ENCODE measurements at regions of chr13 and their contacts with region 1.

Region 1: GRCh38 chr13:44577236-44578066 is 1.3 kb upstream of the TSC22D1 start:
- DNase-seq: peak; percentile 96 to 97
- ATAC-seq: peak; percentile 64 to 68
- H3K4me3 ChIP-seq: peak overlapping the region; percentile 85 to 98 (median 97)
- H3K27ac ChIP-seq: peak overlapping the region; percentile 97 to 100 (median 99)
- H3K4me1 ChIP-seq: peaks cover 17 to 27% of the 10 kb centered on the region in 2 donors
- H3K27me3 ChIP-seq: no peaks in the 10 kb centered on the region
- CTCF ChIP-seq: peak in 2 of 5 experiments; percentile 11 to 38
- POLR2A ChIP-seq: peak; percentile 91 to 92

Region 2: DNA sequence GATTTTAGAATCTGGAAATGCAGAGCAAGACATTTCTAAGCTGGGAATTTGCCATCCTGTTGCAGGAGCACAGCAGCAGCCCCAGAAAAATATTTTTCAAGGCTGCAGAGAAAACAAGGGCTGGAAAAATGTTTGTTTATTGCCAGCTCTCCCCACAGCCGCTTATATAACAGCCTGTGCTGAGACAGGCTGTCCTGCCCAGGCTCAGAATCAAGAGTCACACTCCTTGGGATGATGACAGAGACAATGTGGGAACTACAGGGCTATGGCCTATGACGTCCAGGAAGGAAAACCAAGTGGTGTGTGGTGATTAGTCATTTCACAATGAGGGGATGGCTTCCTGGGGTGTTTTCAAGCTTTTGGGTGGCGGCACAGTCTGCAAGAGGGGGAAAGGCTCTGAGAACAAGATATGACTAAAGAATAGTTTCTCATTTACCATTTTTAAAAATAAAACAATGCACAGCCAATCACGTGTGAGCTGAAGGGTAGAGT is 340.1 kb before region 1 on chr13:
- in situ Hi-C with region 1: no loop called
- intact Hi-C with region 1: loop called (anchors 10 kb)
- DNase-seq: peak; percentile 86 to 89
- ATAC-seq: peak; percentile 87 to 90
- H3K4me3 ChIP-seq: no peak overlapping the region
- H3K27ac ChIP-seq: peak overlapping the region; percentile 91 to 94 (median 93)
- H3K4me1 ChIP-seq: peaks cover 47 to 51% of the 10 kb centered on the region in 2 donors
- H3K27me3 ChIP-seq: no peaks in the 10 kb centered on the region
- CTCF ChIP-seq: no peak
- POLR2A ChIP-seq: peak; percentile 39 to 60

Region 3: DNA sequence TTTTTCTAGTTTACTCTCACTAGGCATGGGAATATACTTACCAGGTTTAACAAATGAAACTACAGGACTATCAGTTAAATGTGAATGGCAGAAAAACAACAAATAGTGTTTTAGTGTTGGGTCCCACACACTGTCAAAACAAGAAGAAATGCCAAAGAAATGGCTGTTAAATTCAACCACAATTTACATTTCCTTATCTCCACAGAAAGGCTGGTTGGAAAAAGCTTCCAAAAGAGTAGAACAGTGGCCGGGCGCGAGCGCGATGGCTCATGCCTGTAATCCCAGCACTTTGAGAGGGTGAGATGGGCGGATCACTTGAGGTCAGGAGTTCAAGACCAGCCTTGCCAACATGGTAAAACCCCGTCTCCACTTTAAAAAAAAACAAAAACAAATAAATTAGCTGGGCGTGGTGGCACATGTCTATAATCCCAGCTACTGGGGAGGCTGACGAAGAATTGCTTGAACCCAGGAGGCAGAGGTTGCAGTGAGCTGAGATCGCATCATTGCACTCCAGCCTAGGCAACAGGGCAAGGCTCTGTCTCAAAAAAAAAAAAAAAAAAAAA is 137.3 kb before region 1 on chr13:
- in situ Hi-C with region 1: no loop called
- intact Hi-C with region 1: no loop called
- DNase-seq: no peak
- ATAC-seq: no peak
- H3K4me3 ChIP-seq: no peak overlapping the region
- H3K27ac ChIP-seq: peak overlapping the region; percentile 70 to 95 (median 73)
- H3K4me1 ChIP-seq: peaks cover 30 to 31% of the 10 kb centered on the region in 2 donors
- H3K27me3 ChIP-seq: no peaks in the 10 kb centered on the region
- CTCF ChIP-seq: no peak
- POLR2A ChIP-seq: no peak

Region 4: GRCh38 chr13:44734201-44734707 is 156.8 kb after region 1 on chr13:
- in situ Hi-C with region 1: no loop called
- intact Hi-C with region 1: loop called (anchors 5 kb)
- DNase-seq: peak; percentile 94 to 98
- ATAC-seq: peak; percentile 80 to 83
- H3K4me3 ChIP-seq: peak overlapping the region in 1 of 4 donors; percentile 24
- H3K27ac ChIP-seq: peak overlapping the region; percentile 88 to 94 (median 92)
- H3K4me1 ChIP-seq: peaks cover 38 to 42% of the 10 kb centered on the region in 2 donors
- H3K27me3 ChIP-seq: no peaks in the 10 kb centered on the region
- CTCF ChIP-seq: no peak
- POLR2A ChIP-seq: no peak

Region 5: DNA sequence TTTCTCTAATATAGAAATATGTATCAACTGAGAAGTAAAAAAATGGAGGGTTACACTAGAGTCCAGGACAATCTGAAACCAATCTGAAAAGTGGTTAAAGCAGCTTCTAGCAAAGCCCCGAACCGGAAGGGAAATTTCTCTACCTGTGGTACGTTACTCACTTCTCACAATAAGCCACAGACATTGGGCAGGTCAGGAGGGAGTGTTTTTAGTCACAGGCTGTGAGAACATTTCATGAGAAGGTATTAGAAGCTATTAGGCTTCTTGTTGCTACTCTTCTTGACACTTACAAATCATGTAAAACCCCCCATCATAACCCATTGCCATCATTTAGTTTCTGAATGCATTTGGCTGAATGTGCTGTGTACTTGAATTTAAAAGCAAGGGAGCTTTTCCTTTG is 290.9 kb after region 1 on chr13:
- in situ Hi-C with region 1: no loop called
- intact Hi-C with region 1: loop called (anchors 1 kb)
- DNase-seq: no peak
- ATAC-seq: no peak
- H3K4me3 ChIP-seq: no peak overlapping the region
- H3K27ac ChIP-seq: peak overlapping the region; percentile 86 to 95 (median 94)
- H3K4me1 ChIP-seq: peaks cover 32 to 34% of the 10 kb centered on the region in 2 donors
- H3K27me3 ChIP-seq: no peaks in the 10 kb centered on the region
- CTCF ChIP-seq: no peak
- POLR2A ChIP-seq: no peak

Region 6: DNA sequence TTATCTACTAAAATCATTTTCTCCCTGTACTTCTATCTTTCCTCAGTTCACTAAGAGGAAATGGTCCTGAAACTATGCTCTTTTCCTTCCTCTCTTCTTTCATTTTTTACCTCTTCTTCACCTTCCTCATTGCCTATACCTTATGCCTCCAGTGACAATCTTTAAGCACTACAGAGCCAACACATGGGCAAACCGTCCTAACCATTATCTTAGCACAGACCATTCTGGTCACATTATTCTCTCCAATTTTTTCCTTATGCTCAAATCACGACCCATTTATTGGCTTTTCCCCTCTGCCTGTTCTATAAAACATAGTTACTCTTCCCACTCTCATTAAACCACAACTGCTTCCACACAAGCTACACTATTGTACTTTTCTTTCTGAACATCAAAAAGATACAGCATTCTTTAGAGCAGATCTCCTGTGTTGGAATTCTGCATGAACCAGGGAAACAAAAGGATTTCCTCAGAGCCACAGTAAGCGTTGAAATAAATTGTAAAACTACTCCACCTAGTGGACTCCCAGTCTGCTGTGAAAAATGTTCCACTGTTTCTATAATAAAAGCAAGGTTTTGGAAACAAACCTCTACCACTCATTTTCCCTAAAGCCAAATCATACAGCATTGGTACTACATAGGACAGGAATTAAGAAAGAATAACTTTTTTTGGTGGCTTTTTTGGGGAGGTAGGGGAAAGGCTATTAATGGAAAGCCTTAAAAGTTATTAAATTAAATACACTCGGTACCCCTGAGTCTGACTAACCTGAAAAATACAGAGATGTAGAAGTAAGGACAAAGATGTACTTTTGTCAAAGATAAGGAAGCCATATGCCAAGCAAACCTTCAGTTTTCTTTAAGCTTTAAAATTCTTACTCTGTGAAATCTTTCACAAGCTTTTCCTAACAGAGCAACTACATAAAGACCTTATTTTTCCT is 392.4 kb after region 1 on chr13:
- in situ Hi-C with region 1: loop called in 2 of 4 experiments (anchors 25 kb)
- intact Hi-C with region 1: loop called (anchors 1 kb)
- DNase-seq: no peak
- ATAC-seq: peak; percentile 64 to 69
- H3K4me3 ChIP-seq: no peak overlapping the region
- H3K27ac ChIP-seq: peak overlapping the region; percentile 60 to 81 (median 79)
- H3K4me1 ChIP-seq: peaks cover 37 to 51% of the 10 kb centered on the region in 2 donors
- H3K27me3 ChIP-seq: no peaks in the 10 kb centered on the region
- CTCF ChIP-seq: peak; percentile 78 to 92 (median 82)
- POLR2A ChIP-seq: no peak